Left ventricle myocardium inferior (tissue), 1 donor: ENCODE measurements at regions of chr9 and their contacts with region 1.

Region 1: GRCh38 chr9:37187713-37188439 is 67.5 kb downstream of the ZCCHC7 start:
- DNase-seq: no peak
- H3K4me3 ChIP-seq: no peak overlapping the region
- H3K27ac ChIP-seq: no peak overlapping the region
- H3K4me1 ChIP-seq: no peaks in the 10 kb centered on the region
- H3K27me3 ChIP-seq: no peaks in the 10 kb centered on the region
- CTCF ChIP-seq: no peak

Region 2: GRCh38 chr9:37243588-37244345 is 55.9 kb after region 1 on chr9:
- intact Hi-C with region 1: loop called (anchors 10 kb)
- DNase-seq: no peak
- H3K4me3 ChIP-seq: no peak overlapping the region
- H3K27ac ChIP-seq: no peak overlapping the region
- H3K4me1 ChIP-seq: peaks cover 11% of the 10 kb centered on the region
- H3K27me3 ChIP-seq: no peaks in the 10 kb centered on the region
- CTCF ChIP-seq: no peak